Heart left ventricle (tissue), 16 donors: ENCODE measurements at regions of chr13 and their contacts with region 1.

Region 1: GRCh38 chr13:23871616-23872220 is 17.5 kb downstream of the MIPEP start:
- DNase-seq: no peak
- ATAC-seq: peak in 2 of 4 donors; percentile 17 to 41
- H3K4me3 ChIP-seq: no peak overlapping the region
- H3K27ac ChIP-seq: no peak overlapping the region
- H3K4me1 ChIP-seq: peaks cover 0 to 8% (median 0%) of the 10 kb centered on the region in 12 donors
- H3K27me3 ChIP-seq: no peaks in the 10 kb centered on the region
- CTCF ChIP-seq: peak; percentile 54 to 74 (median 64)
- POLR2A ChIP-seq: no peak

Region 2: DNA sequence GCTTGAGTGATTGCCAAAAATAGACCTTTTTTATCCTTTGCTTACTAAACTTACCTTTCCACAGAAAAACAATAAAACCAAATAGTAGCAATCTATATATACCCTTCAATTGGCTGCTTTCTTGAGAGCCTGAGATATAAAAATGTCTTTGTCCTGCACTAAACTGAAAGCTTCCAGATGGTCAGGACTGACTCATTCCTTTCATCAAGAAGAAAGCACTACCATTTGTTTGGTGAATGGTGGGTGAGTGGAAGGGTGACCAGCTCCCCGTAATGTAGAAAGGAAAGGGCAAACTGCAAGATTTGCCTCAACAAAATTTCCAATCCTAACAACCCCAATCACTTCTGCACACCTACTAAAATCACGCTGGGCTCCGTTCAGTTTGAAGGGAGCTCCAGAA is 506.1 kb before region 1 on chr13:
- intact Hi-C with region 1: loop called in 2 of 10 experiments (anchors 10 kb)
- DNase-seq: no peak
- ATAC-seq: no peak
- H3K4me3 ChIP-seq: no peak overlapping the region
- H3K27ac ChIP-seq: no peak overlapping the region
- H3K4me1 ChIP-seq: peaks cover 0 to 17% (median 4%) of the 10 kb centered on the region in 12 donors
- H3K27me3 ChIP-seq: no peaks in the 10 kb centered on the region
- CTCF ChIP-seq: no peak
- POLR2A ChIP-seq: no peak

Region 3: DNA sequence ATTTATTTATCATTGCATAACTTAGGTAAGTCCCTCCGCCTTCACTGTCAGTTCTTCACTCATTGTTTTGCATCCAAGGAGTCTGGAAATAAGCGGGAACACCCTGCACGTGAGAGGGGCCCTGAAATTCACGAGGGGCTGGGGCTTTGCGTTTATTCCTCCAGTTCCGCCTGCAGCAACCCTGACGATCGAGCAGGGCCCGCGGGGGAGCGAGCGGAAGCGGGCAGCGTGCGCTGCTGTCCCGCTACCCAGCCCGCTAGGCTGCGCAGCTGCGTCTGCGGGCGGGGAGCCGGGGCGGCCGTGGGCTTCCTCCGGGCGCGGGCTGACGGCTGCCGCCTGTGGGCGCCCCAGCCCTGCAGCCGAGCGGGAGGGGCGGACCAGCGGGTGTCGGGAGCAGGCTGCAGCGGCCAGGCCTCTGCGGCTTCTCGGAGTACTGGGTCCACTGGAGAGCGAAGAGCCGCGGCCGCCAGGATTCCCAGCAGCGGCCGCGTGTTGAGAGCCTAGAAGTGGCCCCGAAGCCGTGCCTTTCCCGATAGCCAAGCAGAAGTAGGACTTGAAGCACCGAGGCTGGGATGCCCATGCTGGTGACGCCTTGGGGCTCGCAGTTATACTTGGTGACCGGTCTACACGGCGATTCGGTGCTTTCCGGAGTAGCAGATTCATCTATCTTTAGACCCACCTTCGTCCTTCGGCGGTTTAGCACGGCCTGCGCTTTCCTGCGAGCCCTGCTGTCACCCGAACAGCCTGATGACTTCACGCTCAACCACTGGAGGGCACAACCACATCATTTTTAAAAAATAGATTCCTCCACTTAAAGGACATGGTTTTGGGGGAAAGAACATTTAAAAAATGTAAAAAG is 405.3 kb before region 1 on chr13:
- intact Hi-C with region 1: loop called (anchors 1 to 5 kb)
- DNase-seq: peak; percentile 75 to 80 (median 77)
- ATAC-seq: peak; percentile 79 to 95 (median 93)
- H3K4me3 ChIP-seq: peak overlapping the region; percentile 37 to 70 (median 57)
- H3K27ac ChIP-seq: peak overlapping the region; percentile 61 to 91 (median 86)
- H3K4me1 ChIP-seq: peaks cover 0 to 33% (median 14%) of the 10 kb centered on the region in 12 donors
- H3K27me3 ChIP-seq: no peaks in the 10 kb centered on the region
- CTCF ChIP-seq: peak in 11 of 12 donors; percentile 37 to 79 (median 57)
- POLR2A ChIP-seq: no peak

Region 4: GRCh38 chr13:23579072-23579895 is 292.4 kb before region 1 on chr13:
- intact Hi-C with region 1: loop called in 9 of 10 experiments (anchors 5 to 10 kb)
- DNase-seq: peak; percentile 94 to 97 (median 95)
- ATAC-seq: peak; percentile 98 to 99 (median 98)
- H3K4me3 ChIP-seq: peak overlapping the region; percentile 67 to 99 (median 90)
- H3K27ac ChIP-seq: peak overlapping the region; percentile 54 to 96 (median 94)
- H3K4me1 ChIP-seq: peaks cover 0 to 52% (median 11%) of the 10 kb centered on the region in 12 donors
- H3K27me3 ChIP-seq: peaks cover 0 to 19% (median 0%) of the 10 kb centered on the region in 9 donors
- CTCF ChIP-seq: no peak
- POLR2A ChIP-seq: peak in 1 of 2 donors; percentile 68

Region 5: GRCh38 chr13:23715762-23716235 is 155.9 kb before region 1 on chr13:
- intact Hi-C with region 1: loop called in 4 of 10 experiments (anchors 5 to 10 kb)
- DNase-seq: no peak
- ATAC-seq: peak; percentile 24 to 65 (median 40)
- H3K4me3 ChIP-seq: no peak overlapping the region
- H3K27ac ChIP-seq: no peak overlapping the region
- H3K4me1 ChIP-seq: peaks cover 0 to 3% (median 0%) of the 10 kb centered on the region in 12 donors
- H3K27me3 ChIP-seq: no peaks in the 10 kb centered on the region
- CTCF ChIP-seq: peak in 6 of 12 donors; percentile 13 to 26 (median 22)
- POLR2A ChIP-seq: no peak